ENCODE measurements at regions of chr10 and their contacts with region 1.

Region 1: GRCh38 chr10:103231047-103231551 is 14.6 kb upstream of the RPEL1 start:
- DNase-seq: peak; percentile 95
- ATAC-seq: peak; percentile 91
- H3K4me3 ChIP-seq: peak overlapping the region in 1 of 3 experiments; percentile 23; a peak in 1 of 6 replicates
- H3K27ac ChIP-seq: peak overlapping the region; percentile 81
- H3K4me1 ChIP-seq: peaks cover 71% of the 10 kb centered on the region
- H3K27me3 ChIP-seq: no peaks in the 10 kb centered on the region
- CTCF ChIP-seq: no peak
- EP300 ChIP-seq: peak; percentile 29 to 90; a peak in 2 of 4 replicates
- POLR2A ChIP-seq: no peak
- RAD21 ChIP-seq: no peak

Region 2: DNA sequence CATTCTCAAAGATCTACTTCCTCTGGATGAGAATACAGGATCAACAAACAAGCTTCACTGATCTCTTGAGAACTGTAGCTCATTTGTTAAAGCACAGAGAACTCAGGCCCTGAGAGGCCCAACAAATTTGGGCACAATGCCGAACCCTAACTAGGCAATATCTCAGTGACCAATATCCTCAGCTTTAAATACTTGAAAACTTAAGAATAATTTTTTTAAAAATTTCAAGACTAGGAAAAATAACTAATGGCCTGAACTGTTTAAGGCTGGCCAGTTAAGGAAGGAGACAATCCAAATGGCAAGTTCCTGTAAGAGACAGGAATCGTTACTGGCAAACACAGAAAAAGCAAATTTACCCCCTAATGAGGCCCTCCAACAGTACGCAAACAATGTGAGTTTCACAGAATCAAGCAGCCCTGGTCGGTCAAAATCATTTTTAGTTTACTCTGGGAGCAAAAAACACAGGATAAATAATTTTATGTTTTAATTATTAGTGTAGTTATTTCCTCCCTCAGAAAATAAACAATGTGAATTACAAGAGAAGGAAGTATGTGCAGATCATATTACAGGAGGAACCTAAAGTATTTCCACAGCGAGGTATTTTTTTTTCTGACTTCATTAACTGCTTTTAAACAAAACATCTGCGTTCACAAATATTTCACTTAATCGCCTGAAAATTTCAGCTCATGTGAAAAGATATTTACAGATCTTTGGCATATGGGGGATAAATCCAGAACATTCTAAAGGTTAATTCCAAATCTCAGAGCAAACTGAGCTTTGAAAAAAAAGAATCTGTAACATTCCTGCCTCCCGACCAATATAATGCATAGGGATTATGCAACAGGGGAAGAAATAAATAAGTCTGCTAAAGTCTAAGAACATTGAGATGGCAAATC is 77.5 kb before region 1 on chr10:
- CTCF ChIA-PET with region 1: no interaction called
- POLR2A ChIA-PET with region 1: interaction called, 10 read pairs
- in situ Hi-C with region 1: no loop called
- intact Hi-C with region 1: no loop called
- DNase-seq: peak; percentile 51
- ATAC-seq: peak; percentile 71
- H3K4me3 ChIP-seq: peak overlapping the region; percentile 57 to 73 (median 59)
- H3K27ac ChIP-seq: peak overlapping the region; percentile 78
- H3K4me1 ChIP-seq: peaks cover 73% of the 10 kb centered on the region
- H3K27me3 ChIP-seq: no peaks in the 10 kb centered on the region
- CTCF ChIP-seq: no peak
- EP300 ChIP-seq: peak in 1 of 2 experiments; percentile 59; a peak in 1 of 4 replicates
- POLR2A ChIP-seq: no peak
- RAD21 ChIP-seq: no peak

Region 3: DNA sequence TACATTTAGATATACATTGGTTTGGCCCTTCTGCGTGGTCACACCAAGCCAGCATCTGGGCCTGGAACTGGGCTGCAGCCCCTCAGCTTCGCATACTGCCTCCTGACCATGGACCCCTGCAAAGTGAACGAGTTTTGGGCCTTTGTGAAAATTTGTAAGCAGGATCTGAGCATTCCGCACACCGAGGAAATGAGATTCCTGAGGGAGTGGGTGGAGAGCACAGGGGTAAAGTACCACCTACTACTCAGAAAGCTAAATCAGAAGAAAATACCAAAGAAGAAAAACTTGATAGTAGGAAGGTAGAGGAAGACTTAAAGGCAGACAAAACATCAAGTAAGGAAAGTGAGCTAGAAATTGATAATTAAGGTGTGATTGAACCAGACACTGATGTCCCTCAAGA is 15.5 kb before region 1 on chr10:
- CTCF ChIA-PET with region 1: no interaction called
- POLR2A ChIA-PET with region 1: interaction called, 15 read pairs
- in situ Hi-C with region 1: no loop called
- intact Hi-C with region 1: no loop called
- DNase-seq: no peak
- ATAC-seq: no peak
- H3K4me3 ChIP-seq: no peak overlapping the region
- H3K27ac ChIP-seq: no peak overlapping the region
- H3K4me1 ChIP-seq: peaks cover 20% of the 10 kb centered on the region
- H3K27me3 ChIP-seq: no peaks in the 10 kb centered on the region
- CTCF ChIP-seq: no peak
- EP300 ChIP-seq: no peak
- POLR2A ChIP-seq: no peak
- RAD21 ChIP-seq: no peak

Region 4: DNA sequence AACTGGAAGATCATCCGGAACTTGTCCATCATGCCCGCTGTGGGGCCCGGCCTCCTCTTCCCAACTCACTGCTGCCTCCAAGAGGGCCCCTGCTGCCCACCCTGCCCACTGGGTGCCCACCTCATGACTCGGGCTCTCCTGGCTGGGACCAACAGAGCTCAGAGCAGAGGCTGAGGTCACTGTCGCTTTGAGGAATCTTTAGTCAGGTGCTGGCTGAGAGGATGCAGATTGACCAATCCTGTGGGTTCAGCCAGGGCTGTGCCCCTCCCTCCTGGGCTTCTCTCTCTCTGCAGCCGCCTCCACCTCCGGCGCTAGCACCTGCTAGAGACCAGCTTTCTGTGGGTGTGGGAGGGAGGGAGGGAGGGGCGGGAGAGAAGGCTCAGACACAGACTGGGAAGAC is 227.6 kb after region 1 on chr10 and contains the start of gene CALHM1:
- CTCF ChIA-PET with region 1: no interaction called
- POLR2A ChIA-PET with region 1: no interaction called
- in situ Hi-C with region 1: no loop called
- intact Hi-C with region 1: no loop called
- DNase-seq: no peak
- ATAC-seq: peak; percentile 55
- H3K4me3 ChIP-seq: no peak within 1 kb of the TSS
- H3K27ac ChIP-seq: no peak within 1 kb of the TSS
- H3K4me1 ChIP-seq: peaks cover 20% of the 10 kb centered on the region
- H3K27me3 ChIP-seq: peaks cover 1 to 18% of the 10 kb centered on the region in 2 experiments; a peak in 3 of 5 replicates
- CTCF ChIP-seq: no peak
- EP300 ChIP-seq: no peak
- POLR2A ChIP-seq: no peak
- RAD21 ChIP-seq: no peak
- total RNA-seq, gene CALHM1: 0.04 TPM in 1 of 2 replicates, not detected in the other

Measured in HepG2 (cell line).